ENCODE measurements at regions of chr1 and their contacts with region 1.

Region 1: DNA sequence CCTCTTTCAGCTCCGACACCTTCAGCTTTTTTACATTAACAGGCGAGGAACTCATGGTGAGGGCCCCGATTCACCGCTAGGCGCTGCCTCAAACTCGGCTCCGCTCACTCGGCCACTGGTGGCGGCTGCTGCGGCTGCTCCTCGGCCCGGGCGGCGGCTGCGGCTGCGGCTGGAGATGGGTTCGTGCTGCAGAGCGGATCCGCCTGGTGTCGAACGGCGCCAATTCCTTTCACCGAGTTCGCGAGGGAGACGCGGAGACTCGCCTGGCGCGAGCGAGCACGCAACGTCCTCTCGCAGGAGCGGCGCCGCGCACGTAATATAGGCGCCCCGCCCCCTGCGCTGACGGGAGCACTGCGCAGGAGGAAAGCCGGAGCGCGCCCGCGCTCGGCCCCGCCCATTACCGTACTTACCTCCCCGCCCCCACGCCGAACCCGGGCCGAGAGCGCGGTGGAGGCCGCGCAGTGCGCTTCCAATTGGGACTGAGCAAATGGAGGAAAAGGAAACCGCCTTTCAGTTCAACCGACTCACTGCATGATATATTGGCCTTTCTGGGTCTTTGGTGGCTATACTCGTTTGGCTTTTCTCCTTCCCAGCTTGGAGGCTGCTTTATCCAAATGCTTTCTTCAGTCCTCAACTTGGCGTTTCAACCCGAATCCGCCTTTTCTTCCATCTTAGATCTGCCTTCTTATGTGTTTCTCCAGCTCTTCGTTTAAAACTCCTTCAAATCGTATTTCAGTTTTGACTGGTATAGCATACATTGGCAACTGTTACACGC is at the start of gene HNRNPU:
- DNase-seq: peak; percentile 90 to 99 (median 95)
- ATAC-seq: peak; percentile 64 to 73 (median 67)
- H3K4me3 ChIP-seq: peak within 1 kb of the TSS; percentile 94 to 99
- H3K4me3 Mint-ChIP-seq: peak within 1 kb of the TSS; percentile 85 to 92 (median 91)
- H3K27ac ChIP-seq: peak within 1 kb of the TSS; percentile 100
- H3K27ac Mint-ChIP-seq: peak within 1 kb of the TSS; percentile 93 to 95
- H3K4me1 ChIP-seq: peaks cover 28 to 29% of the 10 kb centered on the region in 2 experiments
- H3K4me1 Mint-ChIP-seq: peaks cover 45 to 50% (median 49%) of the 10 kb centered on the region in 3 donors
- H3K27me3 ChIP-seq: no peaks in the 10 kb centered on the region
- H3K27me3 Mint-ChIP-seq: no peaks in the 10 kb centered on the region
- total RNA-seq, gene HNRNPU: 302 to 498 (median 321) TPM

Region 2: GRCh38 chr1:244515680-244516079 is 348.8 kb before region 1 on chr1:
- CTCF ChIA-PET with region 1: no interaction called
- POLR2A ChIA-PET with region 1: no interaction called
- DNase-seq: no peak
- ATAC-seq: no peak
- H3K4me3 ChIP-seq: no peak overlapping the region
- H3K4me3 Mint-ChIP-seq: no peak overlapping the region
- H3K27ac ChIP-seq: no peak overlapping the region
- H3K27ac Mint-ChIP-seq: no peak overlapping the region
- H3K4me1 ChIP-seq: no peaks in the 10 kb centered on the region
- H3K4me1 Mint-ChIP-seq: no peaks in the 10 kb centered on the region
- H3K27me3 ChIP-seq: peaks cover 0 to 4% of the 10 kb centered on the region in 2 experiments
- H3K27me3 Mint-ChIP-seq: no peaks in the 10 kb centered on the region

Region 3: GRCh38 chr1:244730153-244730933 is 134.1 kb before region 1 on chr1:
- CTCF ChIA-PET with region 1: no interaction called
- POLR2A ChIA-PET with region 1: interaction called in 1 of 2 experiments, 12 read pairs
- DNase-seq: peak in 26 of 35 experiments; percentile 3 to 40 (median 18)
- ATAC-seq: peak; percentile 71 to 82 (median 74)
- H3K4me3 ChIP-seq: peak overlapping the region; percentile 53 to 94
- H3K4me3 Mint-ChIP-seq: peak overlapping the region; percentile 85 to 87 (median 86)
- H3K27ac ChIP-seq: no peak overlapping the region
- H3K27ac Mint-ChIP-seq: peak overlapping the region in 1 of 2 donors; percentile 66
- H3K4me1 ChIP-seq: peaks cover 0 to 9% of the 10 kb centered on the region in 2 experiments
- H3K4me1 Mint-ChIP-seq: peaks cover 4 to 15% (median 13%) of the 10 kb centered on the region in 3 donors
- H3K27me3 ChIP-seq: peaks cover 0 to 31% of the 10 kb centered on the region in 2 experiments
- H3K27me3 Mint-ChIP-seq: peaks cover 0 to 19% of the 10 kb centered on the region in 2 donors

Region 4: GRCh38 chr1:244821134-244821533 is 43.3 kb before region 1 on chr1:
- CTCF ChIA-PET with region 1: no interaction called
- POLR2A ChIA-PET with region 1: no interaction called
- DNase-seq: no peak
- ATAC-seq: no peak
- H3K4me3 ChIP-seq: no peak overlapping the region
- H3K4me3 Mint-ChIP-seq: no peak overlapping the region
- H3K27ac ChIP-seq: no peak overlapping the region
- H3K27ac Mint-ChIP-seq: no peak overlapping the region
- H3K4me1 ChIP-seq: no peaks in the 10 kb centered on the region
- H3K4me1 Mint-ChIP-seq: no peaks in the 10 kb centered on the region
- H3K27me3 ChIP-seq: peaks cover 0 to 2% of the 10 kb centered on the region in 2 experiments
- H3K27me3 Mint-ChIP-seq: peaks cover 2 to 4% of the 10 kb centered on the region in 2 donors

Region 5: GRCh38 chr1:244835276-244836134 is 28.9 kb before region 1 on chr1 and contains the start of gene COX20:
- CTCF ChIA-PET with region 1: interaction called, 4 to 19 read pairs
- POLR2A ChIA-PET with region 1: interaction called, 57 to 109 read pairs
- DNase-seq: peak; percentile 73 to 94 (median 86)
- ATAC-seq: peak; percentile 67 to 77 (median 72)
- H3K4me3 ChIP-seq: peak within 1 kb of the TSS; percentile 88 to 96
- H3K4me3 Mint-ChIP-seq: peak within 1 kb of the TSS; percentile 86 to 95 (median 86)
- H3K27ac ChIP-seq: peak within 1 kb of the TSS; percentile 91
- H3K27ac Mint-ChIP-seq: peak within 1 kb of the TSS; percentile 99 to 100
- H3K4me1 ChIP-seq: peaks cover 16 to 31% of the 10 kb centered on the region in 2 experiments
- H3K4me1 Mint-ChIP-seq: peaks cover 47 to 58% (median 52%) of the 10 kb centered on the region in 3 donors
- H3K27me3 ChIP-seq: no peaks in the 10 kb centered on the region
- H3K27me3 Mint-ChIP-seq: no peaks in the 10 kb centered on the region
- total RNA-seq, gene COX20: 17.0 to 32.0 (median 27.5) TPM

Region 6: GRCh38 chr1:244849189-244849866 is 15.1 kb before region 1 on chr1:
- CTCF ChIA-PET with region 1: interaction called, 3 to 16 read pairs
- POLR2A ChIA-PET with region 1: interaction called, 13 to 65 read pairs
- DNase-seq: no peak
- ATAC-seq: peak in 1 of 4 experiments; percentile 7
- H3K4me3 ChIP-seq: no peak overlapping the region
- H3K4me3 Mint-ChIP-seq: no peak overlapping the region
- H3K27ac ChIP-seq: no peak overlapping the region
- H3K27ac Mint-ChIP-seq: no peak overlapping the region
- H3K4me1 ChIP-seq: peaks cover 2 to 32% of the 10 kb centered on the region in 2 experiments
- H3K4me1 Mint-ChIP-seq: peaks cover 77 to 91% (median 77%) of the 10 kb centered on the region in 3 donors
- H3K27me3 ChIP-seq: no peaks in the 10 kb centered on the region
- H3K27me3 Mint-ChIP-seq: no peaks in the 10 kb centered on the region

Region 7: DNA sequence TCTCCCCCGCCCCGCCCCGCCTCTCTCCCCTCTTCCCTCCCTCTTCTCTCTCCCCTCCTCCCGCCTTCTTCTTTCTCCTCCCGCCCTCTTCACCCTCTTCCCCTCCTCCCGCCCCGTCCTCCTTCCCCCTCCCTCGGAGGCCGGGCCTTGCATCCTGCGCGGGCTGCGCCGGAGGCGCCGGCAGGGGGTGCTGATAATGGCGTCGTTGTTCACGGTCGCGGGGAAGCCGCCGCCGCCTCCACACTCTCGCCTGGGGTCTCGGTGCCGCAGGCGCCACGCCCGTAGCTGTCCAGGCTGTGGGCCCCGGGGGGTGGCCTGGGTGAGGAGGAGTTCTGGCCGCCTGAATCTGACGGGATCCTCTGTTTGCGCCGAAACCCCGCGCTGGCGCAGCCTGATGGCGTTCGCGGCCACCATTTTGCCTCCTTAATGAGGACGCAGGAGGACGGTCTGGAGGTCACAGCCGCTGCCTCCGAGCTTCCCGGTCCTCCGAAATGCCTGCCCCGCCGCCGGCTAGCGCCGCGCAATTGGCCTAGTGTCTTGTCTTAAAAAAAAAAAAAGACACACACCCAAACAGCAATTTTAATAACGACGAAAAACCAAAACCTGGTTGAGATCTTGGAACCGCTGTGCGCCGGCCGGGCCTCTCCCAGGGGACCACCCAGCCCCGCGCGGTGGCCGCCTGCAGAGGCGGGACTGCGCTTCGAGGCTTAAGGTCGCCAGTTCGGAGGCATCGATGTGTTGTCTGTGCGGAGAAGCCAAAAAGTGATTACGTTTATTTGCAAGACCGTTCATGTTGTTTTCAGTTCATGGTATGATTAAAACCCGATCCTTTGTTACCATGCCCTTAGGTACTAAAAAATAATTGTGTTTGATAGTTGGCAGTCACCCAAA is 106.5 kb after region 1 on chr1:
- CTCF ChIA-PET with region 1: interaction called, 3 to 10 read pairs
- POLR2A ChIA-PET with region 1: interaction called, 13 to 68 read pairs
- DNase-seq: peak; percentile 90 to 96 (median 93)
- ATAC-seq: peak; percentile 78 to 88 (median 83)
- H3K4me3 ChIP-seq: peak overlapping the region; percentile 94 to 99
- H3K4me3 Mint-ChIP-seq: peak overlapping the region; percentile 89 to 97 (median 92)
- H3K27ac ChIP-seq: peak overlapping the region; percentile 100
- H3K27ac Mint-ChIP-seq: peak overlapping the region; percentile 96 to 99
- H3K4me1 ChIP-seq: peaks cover 5 to 15% of the 10 kb centered on the region in 2 experiments
- H3K4me1 Mint-ChIP-seq: peaks cover 0 to 25% (median 17%) of the 10 kb centered on the region in 3 donors
- H3K27me3 ChIP-seq: no peaks in the 10 kb centered on the region
- H3K27me3 Mint-ChIP-seq: no peaks in the 10 kb centered on the region

Region 8: DNA sequence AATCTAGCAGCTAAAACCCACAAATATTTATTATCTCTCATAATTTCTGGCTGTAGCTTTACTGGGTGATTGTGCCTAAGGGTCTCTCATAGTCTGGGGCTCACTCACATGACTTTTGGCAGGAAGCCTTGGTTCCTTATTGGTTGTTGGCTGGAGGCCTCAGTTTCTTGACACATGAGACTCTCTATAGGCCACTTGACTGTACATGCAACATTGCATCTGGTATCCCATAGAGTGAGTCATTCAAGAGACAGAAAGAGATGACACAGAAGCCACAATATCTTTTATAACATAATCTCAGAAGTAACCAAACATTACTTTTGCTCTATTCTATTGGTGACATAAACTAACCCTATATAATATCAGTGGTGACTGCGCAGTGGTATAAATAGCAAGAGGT is 128.4 kb after region 1 on chr1:
- CTCF ChIA-PET with region 1: no interaction called
- POLR2A ChIA-PET with region 1: no interaction called
- DNase-seq: no peak
- ATAC-seq: no peak
- H3K4me3 ChIP-seq: no peak overlapping the region
- H3K4me3 Mint-ChIP-seq: no peak overlapping the region
- H3K27ac ChIP-seq: no peak overlapping the region
- H3K27ac Mint-ChIP-seq: no peak overlapping the region
- H3K4me1 ChIP-seq: no peaks in the 10 kb centered on the region
- H3K4me1 Mint-ChIP-seq: no peaks in the 10 kb centered on the region
- H3K27me3 ChIP-seq: no peaks in the 10 kb centered on the region
- H3K27me3 Mint-ChIP-seq: no peaks in the 10 kb centered on the region